Right ventricle myocardium inferior (tissue), 1 donor: ENCODE measurements at regions of chr19 and their contacts with region 1.

Region 1: GRCh38 chr19:12983542-12984142 is 11.6 kb upstream of the NFIX start:
- DNase-seq: peak; percentile 89
- ATAC-seq: peak; percentile 78

Region 2: DNA sequence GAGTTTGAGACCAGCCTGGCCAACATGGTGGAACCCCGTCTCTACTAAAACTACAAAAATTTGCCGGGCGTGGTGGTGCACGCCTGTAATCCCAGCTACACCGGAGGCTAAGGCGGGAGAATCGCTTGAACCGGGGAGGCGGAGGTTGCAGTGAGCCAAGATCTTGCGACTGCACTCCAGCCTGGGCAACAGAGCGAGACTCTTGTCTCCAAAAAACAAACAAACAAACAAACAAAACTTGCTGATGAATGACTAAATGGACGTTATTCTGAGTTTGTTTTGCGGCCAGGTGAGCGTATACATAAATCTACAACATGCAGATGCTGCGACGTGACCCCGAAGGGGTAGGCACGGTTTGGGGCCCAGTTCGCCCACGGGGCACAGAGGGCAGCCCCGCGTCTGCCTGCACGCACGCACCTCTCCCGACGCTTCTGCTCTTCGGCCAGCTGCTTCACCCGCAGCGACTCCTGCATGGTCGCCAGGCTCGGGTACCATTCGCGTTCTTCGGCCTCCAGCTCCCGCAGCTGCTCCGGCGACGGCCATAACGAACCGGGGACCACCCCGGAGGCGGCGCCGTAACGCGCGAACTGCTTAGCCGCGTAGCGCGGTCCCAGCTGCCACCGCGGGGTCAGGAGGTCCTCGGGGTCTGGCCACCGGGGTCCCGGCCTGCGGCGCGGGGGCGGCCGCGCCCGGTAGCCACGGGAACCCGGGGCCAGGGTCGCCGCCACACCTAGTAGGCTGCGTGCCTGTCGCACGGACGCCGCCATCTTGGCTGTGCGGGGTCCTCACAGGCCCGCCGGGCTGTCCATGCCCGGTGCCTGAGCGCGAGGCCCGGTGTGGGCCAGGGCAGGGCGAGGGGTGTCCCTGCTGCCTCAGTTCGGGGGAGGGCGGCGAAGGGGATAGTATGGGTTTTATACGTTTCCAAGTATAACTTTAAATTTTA is 26.9 kb before region 1 on chr19 and contains the start of gene GADD45GIP1:
- intact Hi-C with region 1: no loop called
- DNase-seq: peak; percentile 95
- ATAC-seq: peak; percentile 95
- total RNA-seq, gene GADD45GIP1: 33.7 TPM

Region 3: DNA sequence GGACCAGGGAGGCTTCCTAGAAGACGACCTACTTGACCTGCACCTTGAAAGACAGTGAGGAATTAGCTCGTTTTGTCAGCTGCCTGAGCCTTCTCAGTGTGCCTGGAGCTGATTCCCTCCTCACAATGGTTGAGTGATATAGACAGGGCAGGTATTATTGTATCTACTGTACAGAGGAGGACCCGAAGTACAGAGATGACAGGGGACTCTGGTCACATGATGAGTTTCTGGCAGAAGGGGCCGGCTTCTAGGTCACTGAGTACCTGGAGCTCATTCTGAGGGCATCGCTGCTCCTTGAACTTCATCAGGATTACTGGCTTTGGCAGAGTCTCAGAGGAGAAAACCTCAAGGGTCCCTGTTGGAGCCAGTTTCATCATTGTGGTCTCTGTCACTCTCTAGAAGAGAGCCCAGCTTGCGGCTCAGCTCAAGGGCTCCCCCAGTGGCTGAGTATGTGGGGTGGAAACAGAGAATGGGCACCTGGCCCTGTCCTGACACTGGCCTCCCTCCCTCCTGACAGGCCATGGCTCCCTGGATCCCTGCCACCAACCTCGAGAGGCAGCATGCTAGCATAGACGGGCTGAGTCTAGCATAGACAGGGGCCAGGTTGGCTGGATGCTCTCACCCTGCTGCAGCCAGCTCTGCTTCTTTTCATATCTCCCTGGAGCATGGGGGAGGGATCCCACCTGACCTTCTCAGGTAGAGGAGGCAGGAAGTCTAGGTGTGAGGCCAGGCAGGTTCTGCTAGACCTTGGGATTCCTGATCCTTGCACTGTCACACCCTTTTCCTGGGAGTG is 50.4 kb after region 1 on chr19:
- intact Hi-C with region 1: loop called (anchors 2 kb)
- DNase-seq: peak; percentile 89
- ATAC-seq: peak; percentile 70

Region 4: GRCh38 chr19:13060964-13061927 is 77.6 kb after region 1 on chr19:
- intact Hi-C with region 1: loop called (anchors 1 kb)
- DNase-seq: peak; percentile 93
- ATAC-seq: peak; percentile 75

Region 5: GRCh38 chr19:13093407-13094105 is 109.9 kb after region 1 on chr19:
- intact Hi-C with region 1: loop called (anchors 1 kb)
- DNase-seq: peak; percentile 93
- ATAC-seq: peak; percentile 65

Region 6: DNA sequence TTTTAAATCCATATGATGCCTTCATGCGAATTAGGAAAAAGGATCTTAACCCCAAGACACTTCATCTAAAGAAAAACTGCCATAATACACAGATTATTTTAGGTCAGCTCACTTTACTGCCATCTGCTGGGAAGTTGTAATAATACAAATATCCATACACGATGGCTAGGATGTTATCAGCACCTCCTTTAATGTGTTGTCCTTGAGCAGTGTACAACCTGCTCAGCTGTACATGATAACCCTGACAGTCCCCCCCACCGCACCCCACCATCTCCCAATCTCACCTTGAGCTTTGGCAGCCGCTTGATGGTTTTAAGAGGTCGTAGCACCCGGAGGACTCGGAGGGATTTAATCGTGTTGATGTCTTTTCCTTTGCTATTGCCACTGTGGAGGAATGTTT is 278.8 kb after region 1 on chr19:
- intact Hi-C with region 1: loop called (anchors 2 kb)
- DNase-seq: no peak
- ATAC-seq: no peak